Heart right ventricle (tissue), 16 donors: ENCODE measurements at regions of chr2 and their contacts with region 1.

Region 1: GRCh38 chr2:71923887-71924533 is 223.7 kb downstream of the CYP26B1 start:
- DNase-seq: peak in 1 of 2 donors; percentile 68
- ATAC-seq: peak; percentile 62 to 91 (median 76)
- H3K4me3 ChIP-seq: no peak overlapping the region
- H3K27ac ChIP-seq: no peak overlapping the region
- H3K4me1 ChIP-seq: peaks cover 0 to 4% (median 0%) of the 10 kb centered on the region in 9 donors
- H3K27me3 ChIP-seq: no peaks in the 10 kb centered on the region
- CTCF ChIP-seq: peak; percentile 72 to 89 (median 86)

Region 2: DNA sequence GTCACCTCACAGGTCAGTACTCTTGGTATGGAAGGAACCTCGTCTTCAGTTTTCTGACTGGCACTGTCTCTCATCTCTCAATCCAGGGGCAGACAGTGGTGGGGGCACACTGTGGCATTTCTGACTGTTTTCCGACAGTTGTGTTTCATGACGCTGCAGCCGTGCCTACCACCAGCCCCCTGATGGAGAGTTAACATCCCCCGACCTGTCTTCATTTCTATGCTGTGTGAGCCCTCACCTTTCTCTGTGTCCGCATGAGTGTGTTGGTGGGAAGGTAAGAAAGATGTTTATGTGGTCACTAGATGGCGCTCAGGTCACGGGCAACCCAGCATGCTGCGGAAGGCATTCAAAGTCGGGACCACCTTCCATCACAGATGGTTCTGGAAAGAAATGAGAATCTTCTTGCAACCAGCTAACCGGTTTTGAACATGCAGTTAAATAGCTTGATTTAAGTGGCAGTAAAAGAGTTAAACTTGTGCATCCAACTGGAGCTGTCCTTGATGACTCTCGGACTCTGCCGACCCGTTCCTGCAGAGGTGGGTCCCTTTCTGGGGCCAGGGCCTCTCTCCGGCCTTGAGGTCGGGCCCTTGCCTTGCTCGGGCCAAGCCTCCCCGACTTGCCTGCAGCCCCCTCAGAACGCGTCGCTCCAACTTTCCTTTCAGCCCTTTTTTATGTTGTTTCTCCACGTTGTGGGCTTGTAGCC is 378.3 kb before region 1 on chr2:
- intact Hi-C with region 1: loop called in 4 of 10 experiments (anchors 5 to 10 kb)
- DNase-seq: peak in 1 of 2 donors; percentile 55
- ATAC-seq: peak; percentile 59 to 83 (median 78)
- H3K4me3 ChIP-seq: peak overlapping the region in 6 of 10 donors; percentile 15 to 30 (median 24)
- H3K27ac ChIP-seq: peak overlapping the region in 9 of 10 donors; percentile 34 to 79 (median 71)
- H3K4me1 ChIP-seq: peaks cover 0 to 17% (median 13%) of the 10 kb centered on the region in 9 donors
- H3K27me3 ChIP-seq: no peaks in the 10 kb centered on the region
- CTCF ChIP-seq: peak; percentile 66 to 83 (median 75)

Region 3: DNA sequence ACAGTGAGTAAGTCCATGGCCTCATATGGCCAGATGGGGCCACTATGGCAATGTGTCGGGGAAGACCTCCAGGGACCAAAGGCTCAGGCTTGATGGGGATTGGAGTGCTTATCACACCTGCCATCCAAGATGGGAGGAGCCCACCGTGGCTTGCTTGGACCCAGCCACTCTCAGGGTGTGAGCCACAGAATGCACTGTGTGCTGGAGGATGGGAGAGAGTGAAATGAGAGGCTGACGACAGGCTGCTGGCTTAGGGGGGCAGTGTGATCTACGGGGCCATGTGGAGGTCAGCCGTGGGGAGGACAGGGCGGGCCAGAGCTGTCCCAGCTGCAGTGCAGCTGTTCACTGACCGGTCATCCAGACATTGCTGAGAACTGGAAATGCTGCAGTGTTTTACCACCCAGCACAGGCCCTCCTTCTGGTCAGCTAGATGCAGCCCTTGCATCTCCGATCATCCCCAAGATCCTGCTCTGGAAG is 116.0 kb before region 1 on chr2:
- intact Hi-C with region 1: loop called in 3 of 10 experiments (anchors 5 to 10 kb)
- DNase-seq: peak; percentile 59 to 65
- ATAC-seq: peak; percentile 85 to 96 (median 93)
- H3K4me3 ChIP-seq: no peak overlapping the region
- H3K27ac ChIP-seq: no peak overlapping the region
- H3K4me1 ChIP-seq: peaks cover 0 to 18% (median 0%) of the 10 kb centered on the region in 9 donors
- H3K27me3 ChIP-seq: no peaks in the 10 kb centered on the region
- CTCF ChIP-seq: no peak

Region 4: DNA sequence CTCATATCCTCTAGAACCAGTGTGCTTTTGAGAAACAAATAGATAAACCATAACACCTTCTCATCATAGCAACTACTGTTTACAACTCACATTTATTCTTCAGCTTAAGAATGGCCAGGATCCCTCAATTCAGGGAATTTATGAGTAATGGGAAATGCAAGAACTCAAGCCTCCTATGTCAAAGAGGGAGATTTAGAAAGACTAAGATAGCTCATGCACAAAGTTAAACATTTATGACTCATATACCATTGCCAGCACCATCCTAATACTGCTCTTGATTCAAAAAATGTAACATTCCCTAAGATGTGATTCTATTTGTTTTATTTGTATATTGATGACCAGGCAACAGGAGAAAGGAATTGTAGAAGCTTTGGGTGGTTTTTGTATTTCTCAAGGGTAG is 50.8 kb after region 1 on chr2:
- intact Hi-C with region 1: no loop called
- DNase-seq: no peak
- ATAC-seq: no peak
- H3K4me3 ChIP-seq: no peak overlapping the region
- H3K27ac ChIP-seq: no peak overlapping the region
- H3K4me1 ChIP-seq: no peaks in the 10 kb centered on the region
- H3K27me3 ChIP-seq: peaks cover 0 to 38% (median 8%) of the 10 kb centered on the region in 7 donors
- CTCF ChIP-seq: no peak

Region 5: DNA sequence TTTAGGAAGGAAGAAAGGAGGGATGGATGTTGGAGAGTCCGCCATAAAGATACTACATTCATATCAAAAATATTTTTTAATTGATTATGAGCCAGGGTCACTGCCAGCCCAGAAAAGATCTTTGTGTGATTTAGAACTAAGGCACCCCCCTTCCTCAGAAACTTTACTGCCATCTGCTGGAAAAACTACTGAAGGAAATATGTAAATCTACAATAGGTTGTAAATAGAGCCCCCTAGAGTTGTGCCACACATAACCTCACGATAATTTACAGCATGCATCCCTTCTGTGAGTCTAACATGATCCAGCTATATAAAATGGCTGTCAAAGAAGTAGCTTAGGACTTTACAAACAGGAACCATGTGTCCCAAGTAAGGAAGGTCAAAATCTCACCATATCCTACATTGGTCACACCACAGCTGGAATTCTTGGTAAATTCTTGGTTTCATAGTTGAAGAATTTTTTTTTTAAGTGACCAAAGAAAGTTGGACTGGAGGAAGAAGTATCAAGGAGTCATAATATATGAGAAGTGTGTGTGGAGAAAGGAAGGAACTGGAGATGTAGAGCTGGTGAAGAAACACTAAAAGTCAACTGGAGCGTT is 71.2 kb after region 1 on chr2:
- intact Hi-C with region 1: loop called in 1 of 10 experiments (anchors 5 kb)
- DNase-seq: no peak
- ATAC-seq: no peak
- H3K4me3 ChIP-seq: no peak overlapping the region
- H3K27ac ChIP-seq: no peak overlapping the region
- H3K4me1 ChIP-seq: no peaks in the 10 kb centered on the region
- H3K27me3 ChIP-seq: peaks cover 0 to 22% (median 6%) of the 10 kb centered on the region in 7 donors
- CTCF ChIP-seq: peak in 8 of 9 donors; percentile 12 to 52 (median 44)

Region 6: DNA sequence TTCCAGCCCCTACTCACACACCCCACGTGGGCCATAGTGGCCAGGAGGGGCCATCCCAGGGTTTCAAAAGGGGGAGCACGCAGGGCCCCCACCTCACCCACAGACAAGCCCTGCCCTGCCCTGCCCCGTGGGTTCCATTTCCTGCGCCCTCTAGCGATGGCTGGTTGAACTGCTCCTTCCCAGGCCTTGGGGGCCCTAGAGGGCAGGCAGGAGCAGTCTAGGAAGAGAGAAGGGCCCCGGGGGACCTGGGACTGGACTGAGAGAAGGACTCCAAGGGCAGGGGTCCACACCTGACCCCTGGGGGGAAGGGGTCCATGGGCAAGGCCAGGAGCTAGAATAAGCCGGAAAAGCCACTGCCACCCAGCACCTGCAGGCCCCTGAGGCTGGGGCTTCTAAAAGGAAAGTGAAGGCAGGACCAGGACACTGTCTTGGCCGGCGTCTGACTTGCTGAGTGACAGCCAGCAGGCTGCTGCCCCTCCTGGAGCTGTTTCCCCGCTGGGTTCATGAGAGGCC is 213.5 kb after region 1 on chr2:
- intact Hi-C with region 1: loop called in 2 of 10 experiments (anchors 5 kb)
- DNase-seq: peak; percentile 55 to 75
- ATAC-seq: peak; percentile 45 to 82 (median 74)
- H3K4me3 ChIP-seq: peak overlapping the region in 2 of 10 donors; percentile 11 to 15
- H3K27ac ChIP-seq: no peak overlapping the region
- H3K4me1 ChIP-seq: peaks cover 14 to 29% (median 19%) of the 10 kb centered on the region in 9 donors
- H3K27me3 ChIP-seq: peaks cover 0 to 4% (median 0%) of the 10 kb centered on the region in 7 donors
- CTCF ChIP-seq: peak; percentile 68 to 96 (median 90)

Region 7: DNA sequence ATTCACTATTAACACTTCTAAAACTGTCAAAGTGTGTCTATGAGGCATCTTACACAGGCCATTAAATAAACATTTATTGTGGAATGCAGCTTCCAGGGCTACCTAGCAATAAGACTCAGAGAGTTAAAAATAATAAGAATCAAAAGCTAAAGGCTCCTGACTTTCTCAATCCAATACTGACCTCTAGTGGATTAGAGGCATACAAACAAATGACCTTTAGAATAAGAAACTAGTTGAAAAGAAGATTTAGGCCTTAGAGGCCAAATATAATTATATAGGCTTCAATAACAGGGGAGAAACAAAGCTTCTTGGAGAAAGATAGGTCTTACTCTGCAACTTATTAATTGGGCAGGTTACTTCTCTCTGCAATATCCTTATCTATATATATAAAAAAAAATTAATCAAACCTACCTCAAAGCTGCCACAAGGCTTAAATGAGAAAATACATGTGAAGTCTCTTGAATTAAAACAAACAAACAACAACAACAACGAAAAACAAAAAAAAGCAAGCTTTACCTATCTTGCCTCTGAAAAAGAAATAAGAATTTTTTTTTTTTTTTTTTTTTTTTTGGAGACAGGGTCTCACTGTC is 655.7 kb after region 1 on chr2:
- intact Hi-C with region 1: loop called (anchors 5 to 10 kb)
- DNase-seq: no peak
- ATAC-seq: peak in 4 of 8 donors; percentile 11 to 59 (median 30)
- H3K4me3 ChIP-seq: no peak overlapping the region
- H3K27ac ChIP-seq: no peak overlapping the region
- H3K4me1 ChIP-seq: peaks cover 0 to 39% (median 11%) of the 10 kb centered on the region in 9 donors
- H3K27me3 ChIP-seq: no peaks in the 10 kb centered on the region
- CTCF ChIP-seq: peak; percentile 53 to 83 (median 67)

Region 8: GRCh38 chr2:72745679-72746368 is 821.8 kb after region 1 on chr2:
- intact Hi-C with region 1: loop called in 7 of 10 experiments (anchors 5 to 10 kb)
- DNase-seq: peak in 1 of 2 donors; percentile 13
- ATAC-seq: peak in 5 of 8 donors; percentile 33 to 65 (median 39)
- H3K4me3 ChIP-seq: no peak overlapping the region
- H3K27ac ChIP-seq: no peak overlapping the region
- H3K4me1 ChIP-seq: peaks cover 0 to 63% (median 33%) of the 10 kb centered on the region in 9 donors
- H3K27me3 ChIP-seq: no peaks in the 10 kb centered on the region
- CTCF ChIP-seq: peak; percentile 32 to 82 (median 73)